ENCODE measurements at regions of chr5 and their contacts with region 1.

Region 1: GRCh38 chr5:144170276-144171024 is at the starts of genes KCTD16 and YIPF5:
- DNase-seq: peak; percentile 96
- ATAC-seq: peak; percentile 99
- H3K4me3 ChIP-seq: peak within 1 kb of the TSS; percentile 93
- H3K27ac ChIP-seq: peak within 1 kb of the TSS; percentile 87
- H3K4me1 ChIP-seq: no peaks in the 10 kb centered on the region
- H3K27me3 ChIP-seq: no peaks in the 10 kb centered on the region
- CTCF ChIP-seq: no peak
- EP300 ChIP-seq: no peak
- POLR2A ChIP-seq: peak; percentile 88
- RAD21 ChIP-seq: no peak
- polyA plus RNA-seq, gene KCTD16: 0.03 TPM in 1 of 2 experiments, not detected in the other
- polyA plus RNA-seq, gene YIPF5: 25.4 to 47.9 TPM

Region 2: DNA sequence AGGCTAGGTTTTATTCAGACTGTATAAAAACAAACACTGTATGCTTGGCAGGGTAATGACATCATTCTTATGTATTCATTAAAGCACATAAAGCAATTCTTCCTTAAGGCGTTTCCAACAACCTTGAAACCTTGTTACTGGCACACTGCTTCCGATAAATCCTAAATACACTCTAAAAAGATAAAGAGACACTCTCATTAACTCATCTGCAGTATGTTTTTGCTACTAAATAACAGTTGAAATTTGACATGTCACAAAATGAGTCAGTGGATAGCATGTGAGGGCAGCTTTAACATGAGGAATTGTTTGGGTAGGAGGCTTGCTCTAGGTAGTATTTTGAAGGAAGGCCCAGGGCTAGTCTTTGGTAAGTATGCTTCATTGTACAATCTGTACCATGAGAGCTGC is 13.7 kb before region 1 on chr5:
- CTCF ChIA-PET with region 1: interaction called, 3 read pairs
- POLR2A ChIA-PET with region 1: interaction called, 3 read pairs
- RAD21 ChIA-PET with region 1: interaction called, 3 read pairs
- SMC1A ChIA-PET with region 1: interaction called, 3 read pairs
- in situ Hi-C with region 1: no loop called
- intact Hi-C with region 1: loop called (anchors 2 kb)
- DNase-seq: no peak
- ATAC-seq: 0 out of 3 replicates have a peak, but pooled peaks have one; percentile 20
- H3K4me3 ChIP-seq: no peak overlapping the region
- H3K27ac ChIP-seq: no peak overlapping the region
- H3K4me1 ChIP-seq: no peaks in the 10 kb centered on the region
- H3K27me3 ChIP-seq: no peaks in the 10 kb centered on the region
- CTCF ChIP-seq: no peak
- EP300 ChIP-seq: no peak
- POLR2A ChIP-seq: no peak
- RAD21 ChIP-seq: no peak